PC-3 (cell line): ENCODE measurements at regions of chr15 and their contacts with region 1.

Region 1: DNA sequence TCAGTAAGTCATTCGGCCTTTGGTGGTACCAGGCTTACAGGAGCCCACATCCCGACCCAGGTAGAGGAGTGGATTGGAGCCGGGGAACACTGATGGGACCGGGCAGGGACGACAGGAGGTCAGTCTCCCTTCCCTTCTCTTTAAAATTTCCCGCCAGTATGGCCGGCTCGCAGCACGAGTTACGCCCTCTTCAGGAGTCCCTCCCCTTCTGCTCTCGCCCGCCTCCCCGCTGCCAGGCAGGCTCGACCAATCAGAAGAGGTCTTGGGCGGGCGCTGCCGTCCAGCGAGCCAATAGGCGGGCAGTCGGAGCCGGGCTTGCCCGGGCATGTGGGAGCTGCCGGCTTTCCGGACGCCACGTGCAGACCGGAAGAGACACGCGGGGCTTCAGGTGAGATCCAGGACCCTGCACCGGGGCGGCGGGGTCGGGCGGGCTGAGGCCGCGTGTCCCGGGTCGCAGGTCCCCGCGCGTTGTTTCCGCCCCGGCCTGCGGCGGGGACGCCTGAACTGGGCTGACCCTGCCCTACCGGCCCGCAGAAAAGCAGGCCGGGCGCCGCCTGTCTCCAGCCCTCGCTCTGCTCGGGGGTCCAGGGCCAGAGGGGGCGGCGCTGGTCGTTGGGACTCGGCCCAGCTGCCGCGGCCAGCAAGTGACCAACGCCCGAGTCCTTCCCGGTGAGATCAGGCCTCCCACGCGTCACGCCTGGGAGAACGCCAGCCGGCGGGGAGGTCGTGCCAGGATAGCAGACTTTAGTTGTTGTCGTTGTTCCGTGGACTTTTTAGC is at the start of gene AEN:
- DNase-seq: peak; percentile 95
- ATAC-seq: peak; percentile 77
- H3K4me3 ChIP-seq: peak within 1 kb of the TSS; percentile 90
- H3K27ac ChIP-seq: peak within 1 kb of the TSS; percentile 98
- H3K4me1 ChIP-seq: peaks cover 40% of the 10 kb centered on the region
- H3K27me3 ChIP-seq: no peaks in the 10 kb centered on the region
- CTCF ChIP-seq: no peak
- total RNA-seq, gene AEN: 81.3 and 98.7 TPM in 2 replicates

Region 2: DNA sequence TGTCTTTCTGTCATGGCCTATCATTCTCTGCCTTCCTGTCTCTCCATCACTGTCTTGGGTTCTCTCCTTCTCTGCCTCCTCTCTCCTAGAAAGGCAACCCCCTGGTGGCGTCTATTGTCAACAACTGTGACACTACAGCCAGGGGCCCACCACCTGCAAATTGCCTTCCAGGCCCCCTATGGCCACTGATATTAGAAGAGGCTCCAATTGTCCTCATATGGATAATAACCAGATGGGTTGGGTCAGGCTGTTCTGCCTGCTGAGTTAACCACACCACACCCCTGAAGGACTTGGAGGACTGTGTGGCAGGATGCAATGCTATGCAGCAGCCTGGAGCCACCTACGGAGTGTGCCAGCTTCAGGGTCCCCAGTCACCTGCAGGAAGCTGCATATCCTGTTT is 1029.6 kb before region 1 on chr15:
- CTCF ChIA-PET with region 1: no interaction called
- POLR2A ChIA-PET with region 1: no interaction called
- intact Hi-C with region 1: no loop called
- DNase-seq: no peak
- ATAC-seq: no peak
- H3K4me3 ChIP-seq: no peak overlapping the region
- H3K27ac ChIP-seq: no peak overlapping the region
- H3K4me1 ChIP-seq: no peaks in the 10 kb centered on the region
- H3K27me3 ChIP-seq: no peaks in the 10 kb centered on the region
- CTCF ChIP-seq: no peak

Region 3: DNA sequence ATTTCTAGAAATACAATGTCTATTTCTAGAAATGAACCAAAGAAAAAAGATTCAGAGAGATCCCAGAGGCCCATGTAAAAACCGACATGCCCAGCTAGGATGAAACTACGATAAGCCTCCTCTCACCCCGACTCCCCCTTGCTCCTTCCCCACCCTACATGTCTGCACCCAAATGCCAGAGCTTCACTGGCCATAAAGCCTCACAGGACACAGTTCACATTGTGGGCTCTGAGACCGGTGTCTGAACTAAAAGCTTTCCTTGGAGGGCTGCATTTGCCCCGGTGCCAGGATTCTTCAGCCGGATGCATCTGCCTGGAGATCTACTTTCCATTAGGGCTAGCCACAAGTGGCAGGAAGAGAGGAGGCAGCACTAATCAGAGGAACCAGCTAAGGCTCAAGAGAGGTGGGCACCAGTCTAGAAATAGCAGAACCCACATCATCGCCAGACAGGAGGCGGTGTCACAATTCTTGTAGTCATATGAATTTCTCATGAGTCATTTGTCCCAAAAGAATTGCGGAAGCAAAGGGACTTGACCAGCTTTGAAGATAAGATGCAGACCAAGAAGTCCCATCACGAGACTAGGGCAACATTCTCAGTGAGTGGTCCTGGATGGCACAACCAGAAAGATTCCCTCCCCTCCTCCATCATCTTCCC is 718.3 kb before region 1 on chr15:
- CTCF ChIA-PET with region 1: no interaction called
- POLR2A ChIA-PET with region 1: no interaction called
- intact Hi-C with region 1: no loop called
- DNase-seq: no peak
- ATAC-seq: no peak
- H3K4me3 ChIP-seq: no peak overlapping the region
- H3K27ac ChIP-seq: no peak overlapping the region
- H3K4me1 ChIP-seq: no peaks in the 10 kb centered on the region
- H3K27me3 ChIP-seq: no peaks in the 10 kb centered on the region
- CTCF ChIP-seq: no peak

Region 4: DNA sequence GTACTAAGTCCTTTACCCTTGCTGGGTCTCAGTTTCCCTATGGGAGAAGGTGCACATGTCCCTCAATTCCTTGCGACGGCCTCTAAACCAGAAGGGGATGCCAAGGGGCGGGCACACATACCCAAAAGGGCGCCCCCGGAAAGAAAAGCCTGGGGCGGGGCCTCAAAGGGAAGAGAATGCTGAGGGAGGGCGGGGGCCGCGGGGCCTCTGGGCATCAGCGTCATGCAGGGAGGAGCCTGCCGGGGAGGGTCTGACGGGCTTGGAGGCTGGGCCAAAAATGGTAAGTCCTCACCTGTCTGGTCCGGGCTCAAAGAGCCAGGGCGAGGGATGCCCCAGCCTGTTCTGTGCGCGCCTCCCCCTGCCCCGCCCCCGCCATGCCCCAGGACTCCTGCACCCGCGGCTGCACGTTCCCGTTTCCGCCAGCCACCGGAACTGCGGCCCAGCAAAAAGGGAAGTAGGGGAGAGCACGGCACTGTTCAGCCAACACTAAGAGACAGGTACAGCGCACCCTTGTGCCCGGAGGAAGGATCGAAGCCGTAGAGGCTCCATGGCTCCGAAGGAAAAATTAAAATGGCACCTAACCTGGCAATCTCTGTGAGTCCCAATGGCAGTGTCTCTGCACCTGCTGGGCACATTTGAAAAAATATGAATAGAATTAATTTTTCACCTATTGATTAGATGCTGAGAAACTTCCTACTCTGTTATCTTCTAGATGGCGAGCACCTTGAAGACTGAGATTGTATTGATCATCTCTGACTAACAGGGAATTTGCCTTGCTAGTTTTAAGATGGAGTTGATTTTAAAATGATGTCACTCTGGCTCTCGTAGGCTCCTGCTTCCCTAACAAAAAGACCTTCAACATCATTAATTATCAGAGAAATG is 74.7 kb before region 1 on chr15 and contains the start of gene DET1:
- CTCF ChIA-PET with region 1: no interaction called
- POLR2A ChIA-PET with region 1: no interaction called
- intact Hi-C with region 1: loop called (anchors 1 kb)
- DNase-seq: peak; percentile 93
- ATAC-seq: peak; percentile 96
- H3K4me3 ChIP-seq: peak within 1 kb of the TSS; percentile 69
- H3K27ac ChIP-seq: peak within 1 kb of the TSS; percentile 40
- H3K4me1 ChIP-seq: no peaks in the 10 kb centered on the region; the same call in 1 of the 2 replicates
- H3K27me3 ChIP-seq: no peaks in the 10 kb centered on the region
- CTCF ChIP-seq: peak; percentile 76
- total RNA-seq, gene DET1: 1.5 and 1.6 TPM in 2 replicates

Region 5: GRCh38 chr15:88638626-88639372 is 17.6 kb after region 1 on chr15 and contains the start of gene ISG20:
- CTCF ChIA-PET with region 1: interaction called, 17 read pairs
- POLR2A ChIA-PET with region 1: interaction called, 4 read pairs
- intact Hi-C with region 1: loop called (anchors 1 kb)
- DNase-seq: peak; percentile 97
- ATAC-seq: peak; percentile 89
- H3K4me3 ChIP-seq: peak within 1 kb of the TSS; percentile 67
- H3K27ac ChIP-seq: peak within 1 kb of the TSS; percentile 100
- H3K4me1 ChIP-seq: peaks cover 49% of the 10 kb centered on the region
- H3K27me3 ChIP-seq: no peaks in the 10 kb centered on the region
- CTCF ChIP-seq: peak; percentile 43
- total RNA-seq, gene ISG20: 48.6 and 64.0 TPM in 2 replicates

Region 6: GRCh38 chr15:88657326-88658069 is 36.3 kb after region 1 on chr15:
- CTCF ChIA-PET with region 1: interaction called, 5 read pairs
- POLR2A ChIA-PET with region 1: no interaction called
- intact Hi-C with region 1: loop called (anchors 1 kb)
- DNase-seq: peak; percentile 73
- ATAC-seq: peak; percentile 28
- H3K4me3 ChIP-seq: no peak overlapping the region
- H3K27ac ChIP-seq: no peak overlapping the region
- H3K4me1 ChIP-seq: peaks cover 27% of the 10 kb centered on the region
- H3K27me3 ChIP-seq: no peaks in the 10 kb centered on the region
- CTCF ChIP-seq: peak; percentile 94

Region 7: DNA sequence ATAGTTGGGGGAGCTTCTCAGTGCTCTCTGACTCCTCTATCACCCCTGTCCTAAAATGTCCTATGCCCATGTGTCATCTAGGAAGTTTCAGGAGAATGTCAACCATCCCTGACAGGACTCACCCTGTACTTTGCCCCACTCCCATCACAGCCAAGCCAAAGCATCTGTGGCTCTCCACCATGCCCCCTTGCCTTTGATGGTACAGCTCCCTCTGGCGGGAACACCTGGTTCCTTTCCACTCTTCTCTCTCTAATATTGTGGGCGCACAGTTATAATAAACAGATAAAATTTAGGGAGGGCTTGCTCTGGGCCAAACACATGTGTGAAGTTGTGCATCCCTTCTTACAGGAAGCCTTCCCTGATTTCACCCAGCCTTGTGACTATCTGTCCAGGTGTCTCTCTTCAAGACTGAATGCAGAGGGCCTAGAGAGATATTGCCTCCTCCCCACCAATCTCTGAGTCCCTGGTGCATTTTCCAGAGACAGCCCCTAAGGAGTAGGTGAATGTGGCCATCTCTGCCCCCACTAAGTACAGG is 80.4 kb after region 1 on chr15:
- CTCF ChIA-PET with region 1: no interaction called
- POLR2A ChIA-PET with region 1: no interaction called
- intact Hi-C with region 1: loop called (anchors 1 kb)
- DNase-seq: peak; percentile 47
- ATAC-seq: no peak
- H3K4me3 ChIP-seq: no peak overlapping the region
- H3K27ac ChIP-seq: no peak overlapping the region
- H3K4me1 ChIP-seq: no peaks in the 10 kb centered on the region
- H3K27me3 ChIP-seq: peaks cover 60% of the 10 kb centered on the region
- CTCF ChIP-seq: peak; percentile 65

Region 8: GRCh38 chr15:88834211-88834812 is 213.1 kb after region 1 on chr15:
- CTCF ChIA-PET with region 1: interaction called, 3 read pairs
- POLR2A ChIA-PET with region 1: no interaction called
- intact Hi-C with region 1: loop called (anchors 10 kb)
- DNase-seq: peak; percentile 45
- ATAC-seq: peak; percentile 41
- H3K4me3 ChIP-seq: no peak overlapping the region
- H3K27ac ChIP-seq: no peak overlapping the region
- H3K4me1 ChIP-seq: peaks cover 18% of the 10 kb centered on the region
- H3K27me3 ChIP-seq: no peaks in the 10 kb centered on the region
- CTCF ChIP-seq: peak; percentile 85